Mammary epithelial cell (primary cell): ENCODE measurements at regions of chr1 and their contacts with region 1.

Region 1: DNA sequence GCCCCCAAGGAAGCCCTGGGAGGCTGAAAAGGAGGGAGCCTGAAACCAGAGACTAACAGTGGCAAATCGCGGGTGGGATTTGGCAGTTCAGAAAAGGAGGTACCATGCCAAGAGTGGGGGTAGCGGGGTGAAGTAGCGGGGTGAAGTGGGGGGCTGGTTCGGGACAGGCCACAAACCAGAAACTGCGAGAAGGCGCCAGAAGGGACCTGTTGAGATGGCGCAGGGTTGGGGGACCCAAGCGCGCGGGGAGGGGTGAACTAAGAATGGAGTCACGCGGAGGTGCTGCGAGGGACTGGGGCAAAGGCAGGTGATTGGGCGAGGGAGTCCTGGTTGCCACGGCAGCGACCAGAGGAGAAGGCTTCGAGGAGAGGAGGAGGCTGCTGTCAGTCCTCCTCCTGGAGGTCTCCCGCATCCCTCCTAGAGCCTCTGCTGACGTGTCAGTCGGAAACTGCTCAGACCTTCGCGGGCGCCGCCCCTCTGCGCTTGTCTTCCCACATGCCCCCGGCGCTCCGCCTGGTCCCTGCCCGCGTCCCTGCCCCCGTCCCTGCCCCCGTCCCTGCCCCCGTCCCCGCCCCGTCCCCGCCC is 438 bp upstream of the MIA3 start:
- DNase-seq: peak; percentile 89
- H3K4me3 ChIP-seq: peak overlapping the region; percentile 38 to 59 (median 47)
- H3K27ac ChIP-seq: peak overlapping the region; percentile 29
- H3K4me1 ChIP-seq: peaks cover 7% of the 10 kb centered on the region
- H3K27me3 ChIP-seq: no peaks in the 10 kb centered on the region
- CTCF ChIP-seq: no peak

Region 2: DNA sequence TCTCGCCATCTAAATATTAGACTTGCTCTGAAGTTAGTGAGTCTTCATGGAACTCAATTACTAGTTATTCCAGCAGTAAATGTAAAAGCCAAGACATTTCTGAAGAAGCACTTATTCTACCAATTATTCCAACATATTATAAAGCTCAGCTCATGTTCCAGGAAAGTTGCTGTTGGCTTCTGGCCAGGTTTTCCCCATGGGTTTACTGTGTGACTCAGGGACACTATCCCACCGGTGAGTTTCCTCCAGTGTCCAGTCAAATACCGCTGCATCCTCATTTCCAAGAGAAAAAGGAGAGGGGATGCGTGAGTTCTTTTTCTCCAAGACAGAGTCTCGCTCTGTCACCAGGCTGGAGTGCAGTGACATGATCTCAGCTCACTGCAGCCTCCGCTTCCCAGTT is 60.3 kb before region 1 on chr1:
- CTCF ChIA-PET with region 1: no interaction called
- dilution Hi-C with region 1: no loop called
- in situ Hi-C with region 1: no loop called
- intact Hi-C with region 1: no loop called
- DNase-seq: no peak
- H3K4me3 ChIP-seq: no peak overlapping the region
- H3K27ac ChIP-seq: no peak overlapping the region
- H3K4me1 ChIP-seq: no peaks in the 10 kb centered on the region
- H3K27me3 ChIP-seq: no peaks in the 10 kb centered on the region
- CTCF ChIP-seq: no peak

Region 3: GRCh38 chr1:222582099-222582774 is 35.2 kb before region 1 on chr1:
- CTCF ChIA-PET with region 1: no interaction called
- dilution Hi-C with region 1: no loop called
- in situ Hi-C with region 1: no loop called
- intact Hi-C with region 1: loop called (anchors 1 kb)
- DNase-seq: peak; percentile 84
- H3K4me3 ChIP-seq: no peak overlapping the region
- H3K27ac ChIP-seq: peak overlapping the region; percentile 5
- H3K4me1 ChIP-seq: peaks cover 19% of the 10 kb centered on the region
- H3K27me3 ChIP-seq: no peaks in the 10 kb centered on the region
- CTCF ChIP-seq: no peak

Region 4: DNA sequence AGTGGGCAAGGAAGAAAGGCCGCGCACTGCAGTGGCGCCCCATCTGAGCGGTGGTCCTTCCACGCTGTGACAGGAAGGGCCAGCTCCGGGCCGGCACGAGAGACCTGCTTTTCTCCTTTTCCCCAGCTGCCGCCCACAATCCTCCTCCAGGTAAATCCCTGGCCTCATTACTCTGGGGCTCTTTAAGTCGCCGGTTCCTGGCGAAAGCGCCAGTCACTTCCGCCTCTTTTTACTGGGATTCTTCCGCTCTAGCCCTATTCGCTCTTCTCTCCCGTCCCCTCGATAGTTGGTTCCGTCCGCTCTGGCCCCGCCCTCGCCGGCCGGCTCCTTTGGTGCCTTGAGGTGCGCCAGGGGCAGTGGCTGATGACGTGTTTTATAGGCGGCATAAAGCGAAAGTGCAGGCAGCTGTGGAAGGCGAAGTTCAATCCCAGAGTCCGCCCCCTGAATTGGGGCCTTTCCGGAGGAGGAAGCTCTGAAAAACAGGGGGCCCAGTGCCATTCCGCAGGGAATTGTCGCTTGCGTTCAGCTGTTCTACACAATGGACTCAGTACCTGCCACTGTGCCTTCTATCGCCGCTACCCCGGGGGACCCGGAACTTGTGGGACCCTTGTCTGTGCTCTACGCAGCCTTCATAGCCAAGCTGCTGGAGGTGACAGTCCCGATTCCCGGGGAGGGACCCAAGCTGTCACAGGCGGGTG is 26.6 kb after region 1 on chr1:
- CTCF ChIA-PET with region 1: no interaction called
- dilution Hi-C with region 1: no loop called
- in situ Hi-C with region 1: no loop called
- intact Hi-C with region 1: loop called (anchors 2 kb)
- DNase-seq: peak; percentile 99
- H3K4me3 ChIP-seq: peak overlapping the region; percentile 66 to 95 (median 76)
- H3K27ac ChIP-seq: peak overlapping the region; percentile 87
- H3K4me1 ChIP-seq: peaks cover 5% of the 10 kb centered on the region
- H3K27me3 ChIP-seq: no peaks in the 10 kb centered on the region
- CTCF ChIP-seq: no peak

Region 5: DNA sequence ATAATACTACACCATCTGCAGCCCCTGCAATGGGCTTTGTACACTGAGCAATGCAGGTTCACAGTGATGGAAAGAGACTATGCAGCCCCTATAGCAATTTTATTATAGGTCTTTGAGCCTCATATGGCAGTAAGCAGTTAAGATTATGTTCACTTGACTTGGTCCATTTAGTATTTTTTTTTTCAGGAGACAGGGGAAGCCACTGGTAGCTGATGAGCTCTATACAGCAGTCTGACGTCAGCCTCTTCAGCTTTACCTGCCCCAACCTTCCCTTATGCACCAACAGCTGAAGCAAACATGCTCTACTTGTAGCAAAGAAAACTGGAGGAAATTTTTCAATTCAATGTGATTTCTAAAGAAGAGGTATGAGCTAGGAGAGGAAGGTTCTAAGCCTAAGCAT is 62.6 kb after region 1 on chr1:
- CTCF ChIA-PET with region 1: no interaction called
- dilution Hi-C with region 1: loop called (anchors 5 kb)
- in situ Hi-C with region 1: no loop called
- intact Hi-C with region 1: no loop called
- DNase-seq: no peak
- H3K4me3 ChIP-seq: no peak overlapping the region
- H3K27ac ChIP-seq: no peak overlapping the region
- H3K4me1 ChIP-seq: no peaks in the 10 kb centered on the region
- H3K27me3 ChIP-seq: no peaks in the 10 kb centered on the region
- CTCF ChIP-seq: no peak